Colonic mucosa (tissue), 4 donors: ENCODE measurements at regions of chr6 and their contacts with region 1.

Region 1: GRCh38 chr6:4313044-4313686 is 177.8 kb upstream of the ECI2 start:
- DNase-seq: peak; percentile 83
- H3K4me3 ChIP-seq: no peak overlapping the region
- H3K27ac ChIP-seq: peak overlapping the region; percentile 78
- H3K4me1 ChIP-seq: peaks cover 5% of the 10 kb centered on the region
- H3K27me3 ChIP-seq: no peaks in the 10 kb centered on the region
- CTCF ChIP-seq: peak; percentile 44

Region 2: DNA sequence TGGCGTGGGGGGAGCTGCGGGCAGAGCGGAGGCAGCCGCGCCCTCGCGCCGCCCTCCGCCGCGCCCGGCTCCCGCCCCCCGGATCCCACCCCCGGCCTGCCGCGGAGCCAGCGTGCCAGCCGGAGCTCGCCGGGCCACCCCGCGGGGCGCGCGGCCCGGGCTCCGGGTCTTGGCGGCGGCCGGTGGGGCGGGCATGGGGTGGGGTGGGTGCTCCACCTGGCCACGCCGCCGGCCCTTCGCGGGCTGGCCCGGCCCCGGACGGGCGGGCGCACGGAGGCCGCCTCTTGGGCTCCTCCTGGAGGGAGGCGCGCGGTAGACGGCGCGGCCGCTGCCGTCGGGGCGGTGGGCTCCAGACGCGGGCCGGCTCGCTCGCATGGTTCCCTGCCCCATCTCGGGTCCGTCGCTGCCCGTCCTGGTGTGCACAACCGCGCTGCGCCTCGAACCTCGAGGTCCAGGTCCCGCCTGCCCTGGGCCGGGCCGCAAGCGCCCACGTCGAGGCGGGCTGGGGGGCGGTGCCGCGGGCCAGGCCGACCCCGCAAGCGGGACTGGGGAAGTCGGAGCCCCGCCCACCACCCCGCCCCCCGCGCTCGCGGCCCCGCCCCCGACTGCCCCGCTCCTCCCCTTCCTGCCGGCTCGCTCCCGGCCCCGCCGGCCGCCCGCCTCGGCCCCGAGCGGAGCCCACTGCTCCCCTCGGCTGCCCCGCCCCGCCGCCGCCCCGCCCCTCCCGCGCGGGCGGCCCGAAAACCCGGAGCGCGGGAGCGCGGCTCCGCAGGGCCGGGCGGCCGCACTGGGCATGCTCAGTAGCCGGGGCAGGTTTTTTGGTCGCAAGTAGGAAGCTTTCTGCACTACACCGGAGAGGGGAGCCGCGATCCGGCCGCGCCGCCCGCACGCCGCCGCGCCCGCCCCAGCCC is 462.7 kb after region 1 on chr6 and contains the start of gene CDYL:
- intact Hi-C with region 1: loop called (anchors 10 kb)
- DNase-seq: peak; percentile 87
- H3K4me3 ChIP-seq: peak within 1 kb of the TSS; percentile 59
- H3K27ac ChIP-seq: peak within 1 kb of the TSS; percentile 79
- H3K4me1 ChIP-seq: peaks cover 5% of the 10 kb centered on the region
- H3K27me3 ChIP-seq: no peaks in the 10 kb centered on the region
- CTCF ChIP-seq: peak; percentile 23
- total RNA-seq, gene CDYL: 44.3 to 48.6 TPM

Region 3: GRCh38 chr6:4936681-4937041 is 623.5 kb after region 1 on chr6:
- intact Hi-C with region 1: loop called (anchors 2 kb)
- DNase-seq: no peak
- H3K4me3 ChIP-seq: no peak overlapping the region
- H3K27ac ChIP-seq: no peak overlapping the region
- H3K4me1 ChIP-seq: peaks cover 6% of the 10 kb centered on the region
- H3K27me3 ChIP-seq: no peaks in the 10 kb centered on the region
- CTCF ChIP-seq: peak; percentile 65